ENCODE measurements at regions of chr1 and their contacts with region 1.

Region 1: DNA sequence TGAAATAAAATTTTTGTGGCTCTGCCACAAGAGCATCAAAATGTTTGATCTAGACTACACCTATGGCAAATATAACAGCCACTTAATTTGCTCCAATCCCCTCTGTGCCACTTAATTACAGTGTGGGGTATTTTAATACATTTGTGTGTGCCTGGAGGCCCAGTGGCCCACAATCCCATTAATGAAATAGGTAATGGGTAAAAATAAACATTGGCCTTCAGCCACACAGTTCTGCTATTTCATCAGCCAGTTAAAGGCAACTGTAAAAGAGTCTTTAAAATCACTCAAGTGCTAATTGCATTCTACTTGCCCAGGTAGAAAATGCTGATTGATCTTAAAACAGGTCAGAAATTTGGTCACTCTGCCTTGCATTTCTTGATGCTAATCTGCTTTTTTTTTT is 151.6 kb upstream of the UBE2U start:
- DNase-seq: no peak
- ATAC-seq: peak; percentile 42 to 54
- H3K4me3 ChIP-seq: no peak overlapping the region
- H3K27ac ChIP-seq: peak overlapping the region in 3 of 4 donors; percentile 11 to 29 (median 25)
- H3K4me1 ChIP-seq: peaks cover 23 to 24% of the 10 kb centered on the region in 2 donors
- H3K27me3 ChIP-seq: no peaks in the 10 kb centered on the region
- CTCF ChIP-seq: no peak
- POLR2A ChIP-seq: no peak

Region 2: GRCh38 chr1:63920154-63921117 is 131.4 kb before region 1 on chr1:
- in situ Hi-C with region 1: no loop called
- intact Hi-C with region 1: loop called (anchors 5 kb)
- DNase-seq: no peak
- ATAC-seq: no peak
- H3K4me3 ChIP-seq: no peak overlapping the region
- H3K27ac ChIP-seq: no peak overlapping the region
- H3K4me1 ChIP-seq: peaks cover 17% of the 10 kb centered on the region in 2 donors
- H3K27me3 ChIP-seq: no peaks in the 10 kb centered on the region
- CTCF ChIP-seq: peak in 1 of 5 experiments; percentile 6
- POLR2A ChIP-seq: no peak

Region 3: DNA sequence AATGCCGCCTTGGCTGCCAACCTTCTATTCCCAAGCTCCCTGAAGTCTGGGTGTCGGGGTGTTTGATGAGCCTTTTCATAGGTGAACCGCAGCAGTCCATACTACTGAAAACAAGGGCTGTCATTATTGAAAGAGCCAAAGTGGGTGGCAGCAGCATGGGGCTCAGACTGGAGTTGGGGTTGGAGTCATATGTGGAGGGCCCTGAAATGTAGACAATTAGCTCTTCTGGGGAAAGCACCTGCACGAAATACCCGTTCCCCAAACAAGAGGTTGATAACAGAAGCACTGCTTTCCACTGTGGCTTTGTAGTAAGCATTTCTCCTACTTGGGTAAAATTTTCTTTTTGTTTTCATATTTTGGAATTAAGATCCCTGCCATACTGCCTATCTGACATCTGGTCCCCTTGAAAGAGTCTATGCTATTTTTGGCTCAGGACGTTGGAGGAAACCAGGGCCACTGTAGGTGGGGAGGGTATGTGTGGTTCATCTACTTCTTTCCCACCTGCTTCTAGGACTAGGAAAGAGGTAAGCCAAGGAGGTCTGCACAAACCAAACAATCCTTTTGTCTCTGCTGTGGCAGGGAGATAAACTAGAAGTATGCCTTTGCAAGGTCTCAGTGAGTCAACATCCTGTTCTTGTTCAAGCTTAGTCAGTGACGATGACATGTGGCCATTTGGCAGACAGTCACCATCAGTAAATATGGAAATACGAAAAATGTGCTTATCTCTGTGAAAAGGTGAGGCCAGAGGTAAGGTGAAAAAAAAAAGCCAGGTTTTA is 45.3 kb before region 1 on chr1:
- in situ Hi-C with region 1: no loop called
- intact Hi-C with region 1: no loop called
- DNase-seq: no peak
- ATAC-seq: peak; percentile 51 to 70
- H3K4me3 ChIP-seq: no peak overlapping the region
- H3K27ac ChIP-seq: no peak overlapping the region
- H3K4me1 ChIP-seq: peaks cover 5 to 6% of the 10 kb centered on the region in 2 donors
- H3K27me3 ChIP-seq: no peaks in the 10 kb centered on the region
- CTCF ChIP-seq: no peak
- POLR2A ChIP-seq: no peak

Region 4: DNA sequence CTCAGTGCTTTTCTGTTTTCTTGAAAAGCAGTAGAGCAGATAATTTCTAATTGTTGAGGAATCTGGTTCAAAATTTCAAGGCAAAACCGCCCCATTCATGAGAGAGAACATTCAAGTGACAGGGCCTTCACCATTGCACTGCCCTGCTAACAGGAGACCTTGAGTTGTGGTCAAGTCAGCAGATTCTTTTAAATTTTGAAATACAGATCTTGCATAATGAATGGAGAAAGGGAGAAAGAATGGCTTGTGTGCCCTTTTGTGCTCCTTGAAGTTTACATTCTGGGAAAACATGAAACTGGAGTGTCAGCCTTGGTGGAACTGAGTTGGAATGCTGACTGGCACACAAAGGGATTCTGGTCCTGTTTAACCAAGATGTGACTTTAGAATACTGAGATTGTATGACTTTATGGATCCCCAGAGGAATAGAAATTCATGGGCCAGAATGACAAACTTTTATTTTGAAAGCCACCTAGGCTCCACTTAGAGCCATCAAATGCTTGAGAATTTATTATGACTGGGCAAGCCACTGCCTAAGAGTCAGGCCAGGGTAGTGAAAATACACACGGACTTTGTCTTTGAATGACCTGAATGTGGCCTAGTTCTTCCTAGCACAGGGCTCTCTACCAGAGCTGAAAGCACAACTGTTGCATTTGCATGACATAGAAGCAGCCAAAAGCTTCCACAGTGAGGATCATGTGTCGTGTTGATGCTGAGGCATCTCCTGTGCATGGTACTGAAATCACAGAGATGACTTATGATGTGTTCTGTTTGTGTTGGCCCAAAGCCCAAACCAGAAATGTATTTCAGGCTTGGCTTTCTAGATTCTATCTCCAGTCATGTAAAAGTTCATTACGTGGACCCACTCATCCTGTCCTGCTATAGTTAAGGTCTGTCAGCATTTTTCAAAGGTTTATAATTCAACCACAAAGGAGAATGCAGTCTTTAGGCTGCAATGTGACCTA is 12.6 kb before region 1 on chr1:
- in situ Hi-C with region 1: no loop called
- intact Hi-C with region 1: loop called (anchors 2 kb)
- DNase-seq: peak; percentile 92 to 94
- ATAC-seq: peak; percentile 93 to 94
- H3K4me3 ChIP-seq: no peak overlapping the region
- H3K27ac ChIP-seq: peak overlapping the region; percentile 83 to 95 (median 84)
- H3K4me1 ChIP-seq: peaks cover 51 to 57% of the 10 kb centered on the region in 2 donors
- H3K27me3 ChIP-seq: no peaks in the 10 kb centered on the region
- CTCF ChIP-seq: no peak
- POLR2A ChIP-seq: peak in 1 of 2 donors; percentile 65

Region 5: DNA sequence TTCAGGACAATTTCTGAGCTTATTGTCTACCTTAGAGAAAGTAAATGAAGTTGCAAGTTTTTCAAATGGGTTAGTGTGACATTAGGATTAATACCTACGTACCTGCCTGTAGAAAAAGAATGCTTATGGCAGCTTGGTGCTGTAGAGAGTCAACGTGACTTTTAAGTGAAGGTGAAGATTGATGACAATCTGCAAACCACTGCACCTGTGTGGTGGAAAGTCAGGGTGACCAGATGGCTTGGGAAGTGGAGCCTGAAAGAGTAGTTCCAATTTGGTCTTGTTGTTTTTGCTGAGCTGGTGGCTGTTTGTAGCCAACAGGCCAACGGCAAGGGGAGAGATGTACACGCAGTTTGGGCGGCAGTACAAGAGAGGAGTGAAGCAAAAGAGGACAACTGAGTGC is 992.6 kb after region 1 on chr1:
- in situ Hi-C with region 1: no loop called
- intact Hi-C with region 1: loop called (anchors 5 kb)
- DNase-seq: no peak
- ATAC-seq: no peak
- H3K4me3 ChIP-seq: no peak overlapping the region
- H3K27ac ChIP-seq: no peak overlapping the region
- H3K4me1 ChIP-seq: peaks cover 43 to 46% of the 10 kb centered on the region in 2 donors
- H3K27me3 ChIP-seq: no peaks in the 10 kb centered on the region
- CTCF ChIP-seq: no peak
- POLR2A ChIP-seq: no peak

Measured in gastrocnemius medialis (tissue), 4 donors.